Endothelial cell of umbilical vein (primary cell): ENCODE measurements at regions of chr1 and their contacts with region 1.

Region 1: DNA sequence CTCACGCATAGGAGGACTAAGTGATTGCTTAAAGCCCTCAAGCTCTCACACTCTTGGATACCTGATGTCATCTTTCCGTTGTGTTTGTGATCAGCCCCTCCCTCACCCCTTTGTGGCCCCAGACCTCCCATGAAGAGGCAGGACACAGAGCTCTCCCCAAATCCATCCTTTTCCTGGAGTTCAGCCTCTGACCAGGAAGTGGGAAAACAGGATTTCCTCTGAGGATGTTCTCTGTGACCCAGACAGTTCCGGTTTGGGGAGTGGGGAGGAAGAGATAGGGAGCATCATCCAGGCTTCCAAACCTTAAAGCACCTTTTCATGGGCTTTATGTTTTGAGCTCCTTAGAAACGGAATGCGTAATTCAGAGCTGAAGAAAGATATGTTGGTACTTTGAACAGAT is 11.9 kb upstream of the TAL1 start:
- DNase-seq: no peak
- H3K4me3 ChIP-seq: no peak overlapping the region
- H3K27ac ChIP-seq: no peak overlapping the region
- H3K4me1 ChIP-seq: peaks cover 19% of the 10 kb centered on the region
- H3K27me3 ChIP-seq: no peaks in the 10 kb centered on the region
- CTCF ChIP-seq: no peak
- POLR2A ChIP-seq: no peak

Region 2: DNA sequence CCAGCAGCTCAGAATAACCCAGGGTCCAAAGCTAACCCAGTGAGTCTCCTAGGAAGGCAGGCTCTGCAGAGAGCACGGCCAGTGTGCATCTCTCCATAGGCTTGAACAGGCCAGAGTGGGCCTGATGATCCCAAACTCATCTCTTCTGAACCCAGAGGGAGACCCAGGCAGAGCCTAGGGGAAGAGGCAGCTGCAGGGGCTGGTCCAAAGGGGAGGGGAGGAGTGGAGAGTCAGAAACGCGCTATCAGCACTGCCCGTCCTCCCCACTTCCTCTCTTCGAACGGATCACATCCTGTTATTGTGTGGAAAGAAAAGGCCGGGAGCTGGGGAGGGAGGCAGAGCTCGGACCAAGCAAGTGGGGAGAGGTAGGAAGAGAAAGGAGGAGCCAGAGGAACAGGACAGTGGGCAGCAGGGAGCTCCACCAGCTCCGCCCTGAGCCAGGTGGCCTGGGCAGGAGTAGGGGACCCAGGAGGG is 32.1 kb before region 1 on chr1:
- CTCF ChIA-PET with region 1: no interaction called
- POLR2A ChIA-PET with region 1: no interaction called
- dilution Hi-C with region 1: no loop called
- intact Hi-C with region 1: no loop called
- DNase-seq: peak; percentile 96
- H3K4me3 ChIP-seq: no peak overlapping the region
- H3K27ac ChIP-seq: peak overlapping the region; percentile 92
- H3K4me1 ChIP-seq: peaks cover 58% of the 10 kb centered on the region
- H3K27me3 ChIP-seq: no peaks in the 10 kb centered on the region
- CTCF ChIP-seq: no peak
- POLR2A ChIP-seq: peak; percentile 87

Region 3: GRCh38 chr1:47231301-47232186 is 12.4 kb before region 1 on chr1:
- CTCF ChIA-PET with region 1: interaction called, 4 read pairs
- POLR2A ChIA-PET with region 1: no interaction called
- dilution Hi-C with region 1: no loop called
- intact Hi-C with region 1: loop called (anchors 1 kb)
- DNase-seq: peak; percentile 75
- H3K4me3 ChIP-seq: peak overlapping the region; percentile 62 to 94 (median 81)
- H3K27ac ChIP-seq: peak overlapping the region; percentile 77
- H3K4me1 ChIP-seq: peaks cover 53% of the 10 kb centered on the region
- H3K27me3 ChIP-seq: no peaks in the 10 kb centered on the region
- CTCF ChIP-seq: no peak
- POLR2A ChIP-seq: peak; percentile 76